ENCODE measurements at regions of chr3 and their contacts with region 1.

Region 1: DNA sequence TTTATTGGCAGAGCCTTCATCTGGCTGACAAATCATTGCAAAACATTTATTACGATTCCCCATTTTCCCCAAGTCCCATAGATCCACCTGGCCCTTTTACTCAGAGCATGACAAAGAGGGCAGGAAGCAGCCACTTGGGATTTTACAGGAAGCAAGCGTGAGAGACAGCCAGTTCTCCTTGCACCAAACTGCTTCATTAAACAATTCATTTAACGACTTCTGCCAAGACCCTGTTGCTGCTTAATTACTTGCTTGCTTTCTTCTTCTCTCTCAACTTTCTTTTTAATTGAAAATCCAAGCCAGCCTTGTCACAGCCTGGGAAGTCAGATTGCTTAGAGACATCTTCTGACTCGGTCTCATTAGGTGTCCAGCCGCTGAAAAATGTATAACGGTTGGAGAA is 298.1 kb downstream of the LRRC3B start:
- DNase-seq: no peak
- ATAC-seq: no peak
- H3K4me3 ChIP-seq: no peak overlapping the region
- H3K27ac ChIP-seq: no peak overlapping the region
- H3K4me1 ChIP-seq: no peaks in the 10 kb centered on the region
- H3K27me3 ChIP-seq: no peaks in the 10 kb centered on the region
- CTCF ChIP-seq: no peak

Region 2: DNA sequence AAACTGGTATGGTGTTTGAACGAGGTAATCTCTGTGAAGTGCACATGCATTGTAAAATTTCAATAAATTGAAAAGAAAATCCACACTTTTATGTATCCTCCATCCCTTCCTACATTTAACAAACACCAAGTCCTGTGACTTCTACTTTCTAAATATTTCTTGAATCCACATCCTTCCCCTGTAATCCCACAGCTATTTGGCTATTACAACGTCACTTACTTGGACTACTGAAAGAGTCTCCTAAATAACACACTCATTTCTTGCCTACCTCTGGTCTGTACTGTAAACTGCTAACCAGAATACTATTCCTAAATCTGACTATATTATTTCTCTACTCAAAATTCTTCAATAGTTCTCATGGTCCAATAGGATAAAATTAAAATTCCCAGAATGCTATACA is 272.4 kb after region 1 on chr3:
- CTCF ChIA-PET with region 1: no interaction called
- POLR2A ChIA-PET with region 1: interaction called, 10 read pairs
- in situ Hi-C with region 1: no loop called
- intact Hi-C with region 1: no loop called
- DNase-seq: no peak
- ATAC-seq: no peak
- H3K4me3 ChIP-seq: no peak overlapping the region
- H3K27ac ChIP-seq: no peak overlapping the region
- H3K4me1 ChIP-seq: no peaks in the 10 kb centered on the region
- H3K27me3 ChIP-seq: no peaks in the 10 kb centered on the region
- CTCF ChIP-seq: no peak

Region 3: GRCh38 chr3:27861046-27862036 is 940.7 kb after region 1 on chr3:
- CTCF ChIA-PET with region 1: no interaction called
- POLR2A ChIA-PET with region 1: no interaction called
- in situ Hi-C with region 1: no loop called
- intact Hi-C with region 1: no loop called
- DNase-seq: no peak
- ATAC-seq: no peak
- H3K4me3 ChIP-seq: no peak overlapping the region
- H3K27ac ChIP-seq: no peak overlapping the region
- H3K4me1 ChIP-seq: no peaks in the 10 kb centered on the region
- H3K27me3 ChIP-seq: no peaks in the 10 kb centered on the region
- CTCF ChIP-seq: no peak

Measured in Panc1 (cell line).